Heart right ventricle (tissue), 16 donors: ENCODE measurements at regions of chr22 and their contacts with region 1.

Region 1: GRCh38 chr22:44266796-44267760 is 45.7 kb downstream of the SHISAL1 start:
- DNase-seq: no peak
- ATAC-seq: peak in 1 of 8 donors; percentile 52
- H3K4me3 ChIP-seq: no peak overlapping the region
- H3K27ac ChIP-seq: no peak overlapping the region
- H3K4me1 ChIP-seq: peaks cover 0 to 8% (median 0%) of the 10 kb centered on the region in 9 donors
- H3K27me3 ChIP-seq: no peaks in the 10 kb centered on the region
- CTCF ChIP-seq: no peak

Region 2: DNA sequence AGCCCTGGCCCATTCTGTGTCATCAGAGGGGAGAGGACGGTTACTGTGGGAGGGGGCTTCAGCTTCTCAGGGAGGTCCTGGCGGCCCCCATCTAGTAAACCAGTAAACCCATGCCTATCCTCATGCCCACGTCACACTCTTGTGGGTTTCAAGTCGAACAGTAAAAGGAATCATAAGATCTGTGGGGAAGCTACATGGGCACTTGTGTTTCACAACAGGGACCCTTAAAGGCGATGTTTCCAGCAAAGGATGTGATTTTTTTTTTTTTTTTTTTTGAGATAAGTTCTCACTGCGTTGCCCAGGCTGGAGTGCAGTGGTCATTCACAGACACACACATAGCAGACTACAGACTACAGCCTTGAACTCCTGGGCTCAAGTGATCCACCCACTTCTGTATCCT is 95.5 kb before region 1 on chr22:
- intact Hi-C with region 1: loop called in 1 of 10 experiments (anchors 1 kb)
- DNase-seq: no peak
- ATAC-seq: peak in 1 of 8 donors; percentile 33
- H3K4me3 ChIP-seq: no peak overlapping the region
- H3K27ac ChIP-seq: peak overlapping the region in 1 of 10 donors; percentile 79
- H3K4me1 ChIP-seq: peaks cover 0 to 33% (median 0%) of the 10 kb centered on the region in 9 donors
- H3K27me3 ChIP-seq: no peaks in the 10 kb centered on the region
- CTCF ChIP-seq: no peak